MCF 10A (cell line): ENCODE measurements at regions of chrX and their contacts with region 1.

Region 1: DNA sequence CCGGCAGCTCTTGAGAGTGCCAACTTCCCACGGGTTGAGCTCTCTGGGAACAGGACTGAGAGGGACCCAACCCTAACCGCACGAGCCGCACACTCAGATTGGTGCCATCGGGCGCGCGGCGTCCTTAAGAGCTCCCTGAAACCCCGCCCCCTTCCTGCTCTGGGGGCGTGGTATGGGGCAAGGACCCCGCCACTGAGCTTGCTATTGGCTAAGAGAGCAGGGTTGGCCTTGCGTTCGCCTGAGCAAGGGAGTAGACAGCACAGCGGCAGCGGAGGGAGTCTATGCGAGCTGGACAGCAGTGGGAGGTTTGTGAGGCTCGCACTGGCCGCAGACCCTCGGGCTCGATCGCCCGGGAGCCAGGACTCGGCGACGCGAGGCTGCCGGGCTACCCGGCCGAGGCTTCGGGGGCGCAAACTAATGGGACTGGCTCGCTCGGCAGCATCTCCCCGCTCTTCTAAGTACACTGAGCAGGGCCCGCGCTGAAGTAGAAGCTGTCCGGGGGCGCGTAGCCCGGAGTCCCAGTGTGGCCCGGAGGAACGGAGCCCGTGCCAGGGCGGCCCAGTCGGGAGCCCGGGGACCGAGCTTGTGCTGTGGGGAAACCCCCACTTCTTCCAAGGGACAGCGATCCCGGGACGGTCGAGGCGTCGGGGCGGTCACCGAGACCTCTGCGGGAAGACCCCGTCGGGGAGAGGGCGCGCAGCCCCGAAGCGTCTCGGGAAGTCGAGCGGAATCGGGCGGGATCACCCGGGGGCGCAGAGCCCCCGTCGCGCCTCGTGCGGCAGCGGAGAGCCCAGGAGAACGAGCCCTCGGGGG is at the start of gene EFNB1:
- DNase-seq: peak; percentile 94
- H3K4me3 Mint-ChIP-seq: peak within 1 kb of the TSS; percentile 77
- H3K27ac Mint-ChIP-seq: peak within 1 kb of the TSS; percentile 91
- H3K4me1 Mint-ChIP-seq: peaks cover 10% of the 10 kb centered on the region
- H3K27me3 Mint-ChIP-seq: peaks cover 33% of the 10 kb centered on the region
- CTCF ChIP-seq: no peak
- total RNA-seq, gene EFNB1: 38.9 and 42.9 TPM in 2 replicates

Region 2: DNA sequence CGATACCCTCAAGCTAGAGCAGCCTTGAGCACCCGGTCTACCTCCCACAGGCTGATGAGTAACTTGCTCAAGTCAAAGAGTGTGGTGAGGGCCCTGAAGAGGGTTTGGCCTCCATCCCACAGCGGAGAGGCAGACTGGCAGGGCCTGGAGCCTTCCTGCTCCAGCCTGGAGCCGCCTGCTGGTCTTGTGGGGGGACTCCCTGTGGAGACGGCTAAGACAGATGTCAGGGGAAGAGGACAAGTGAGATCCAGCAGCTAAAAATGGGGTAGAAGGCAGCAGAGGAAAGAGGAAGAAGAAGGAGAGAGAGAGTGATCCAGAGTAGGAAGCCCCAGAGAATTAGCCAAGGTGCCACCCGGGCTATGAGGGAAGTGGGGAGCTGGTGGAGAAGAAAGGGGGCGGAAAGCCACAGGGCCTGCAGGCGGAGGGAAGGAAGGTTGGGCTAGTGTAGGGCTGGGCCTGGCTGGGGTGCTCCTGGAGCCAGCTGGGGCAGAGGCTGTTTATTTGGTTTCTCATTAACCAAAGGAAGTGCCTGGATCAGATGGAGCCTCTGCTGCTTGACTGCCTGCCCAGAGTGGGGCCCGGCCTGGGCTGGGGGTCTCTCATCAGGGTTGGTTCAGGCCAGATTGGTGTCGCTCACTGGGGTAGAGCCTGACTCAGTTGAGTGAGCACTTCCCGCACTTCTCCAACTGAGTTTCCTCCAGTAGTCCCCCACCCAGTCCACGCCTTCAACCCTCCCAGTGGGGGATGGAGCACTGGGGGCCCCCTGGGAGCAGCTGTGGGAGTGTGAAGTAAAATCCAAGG is 14.0 kb after region 1 on chrX:
- CTCF ChIA-PET with region 1: interaction called, 6 read pairs
- POLR2A ChIA-PET with region 1: interaction called, 15 read pairs
- intact Hi-C with region 1: no loop called
- DNase-seq: peak; percentile 57
- H3K4me3 Mint-ChIP-seq: no peak overlapping the region
- H3K27ac Mint-ChIP-seq: no peak overlapping the region
- H3K4me1 Mint-ChIP-seq: peaks cover 6% of the 10 kb centered on the region
- H3K27me3 Mint-ChIP-seq: peaks cover 31% of the 10 kb centered on the region
- CTCF ChIP-seq: no peak

Region 3: GRCh38 chrX:68995780-68996551 is 167.0 kb after region 1 on chrX:
- CTCF ChIA-PET with region 1: interaction called, 3 read pairs
- POLR2A ChIA-PET with region 1: interaction called, 16 read pairs
- intact Hi-C with region 1: no loop called
- DNase-seq: peak; percentile 62
- H3K4me3 Mint-ChIP-seq: peak overlapping the region; percentile 47
- H3K27ac Mint-ChIP-seq: peak overlapping the region; percentile 17
- H3K4me1 Mint-ChIP-seq: peaks cover 20% of the 10 kb centered on the region
- H3K27me3 Mint-ChIP-seq: peaks cover 37% of the 10 kb centered on the region
- CTCF ChIP-seq: no peak

Region 4: GRCh38 chrX:69060631-69061408 is 231.9 kb after region 1 on chrX:
- CTCF ChIA-PET with region 1: interaction called, 100 read pairs
- POLR2A ChIA-PET with region 1: interaction called, 34 read pairs
- intact Hi-C with region 1: no loop called
- DNase-seq: peak; percentile 65
- H3K4me3 Mint-ChIP-seq: no peak overlapping the region
- H3K27ac Mint-ChIP-seq: no peak overlapping the region
- H3K4me1 Mint-ChIP-seq: no peaks in the 10 kb centered on the region
- H3K27me3 Mint-ChIP-seq: peaks cover 24% of the 10 kb centered on the region
- CTCF ChIP-seq: peak; percentile 27

Region 5: DNA sequence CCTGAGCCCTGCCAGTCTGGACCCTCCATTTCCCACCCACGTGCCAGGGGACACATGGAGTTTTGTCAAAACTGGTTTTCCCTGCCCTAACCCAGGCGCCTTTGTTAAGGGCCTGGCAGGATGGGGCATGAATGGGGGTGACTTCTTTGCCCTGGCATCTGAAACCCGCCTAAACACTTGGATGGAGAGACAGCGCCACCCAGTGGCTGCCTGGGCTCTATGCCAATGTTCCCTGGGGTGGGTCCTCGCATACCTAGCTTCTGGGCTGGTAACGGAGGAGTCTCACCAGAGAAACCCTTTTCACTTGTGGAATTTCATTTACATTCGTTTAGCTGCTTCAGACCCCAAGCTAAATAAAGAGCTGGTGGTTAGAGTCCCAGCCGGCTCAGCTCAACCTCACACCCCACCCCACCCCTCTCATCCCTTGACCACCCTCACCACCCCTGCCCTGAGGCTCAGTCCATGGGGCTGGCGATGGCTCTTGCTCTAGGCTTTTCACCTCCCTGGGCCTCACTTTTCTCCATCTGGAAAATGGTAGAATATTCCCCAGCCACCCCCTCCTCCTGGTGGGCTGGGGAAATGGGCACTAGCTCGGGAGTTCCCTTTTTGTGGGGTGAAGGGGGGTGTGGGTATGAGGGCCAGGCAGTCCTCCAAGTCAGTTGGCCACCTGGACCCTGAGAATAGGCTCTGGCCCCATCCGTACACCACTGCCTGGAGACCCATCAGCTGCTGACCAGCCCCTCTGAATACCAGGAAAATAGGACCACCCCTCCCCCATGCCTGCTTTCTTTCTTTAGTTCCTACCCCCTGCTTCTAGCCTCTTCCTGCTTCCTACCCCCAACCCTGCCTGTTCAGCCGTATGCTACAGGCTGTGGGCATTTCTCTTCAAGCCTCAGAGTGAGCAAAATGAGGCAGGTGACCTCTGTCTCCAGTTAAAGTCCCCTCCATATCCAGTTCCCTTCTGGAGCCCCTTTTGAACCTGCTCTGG is 393.5 kb after region 1 on chrX:
- CTCF ChIA-PET with region 1: interaction called, 204 read pairs
- POLR2A ChIA-PET with region 1: interaction called, 16 read pairs
- intact Hi-C with region 1: loop called (anchors 1 kb)
- DNase-seq: peak; percentile 72
- H3K4me3 Mint-ChIP-seq: no peak overlapping the region
- H3K27ac Mint-ChIP-seq: no peak overlapping the region
- H3K4me1 Mint-ChIP-seq: no peaks in the 10 kb centered on the region
- H3K27me3 Mint-ChIP-seq: peaks cover 23% of the 10 kb centered on the region
- CTCF ChIP-seq: peak; percentile 66

Region 6: DNA sequence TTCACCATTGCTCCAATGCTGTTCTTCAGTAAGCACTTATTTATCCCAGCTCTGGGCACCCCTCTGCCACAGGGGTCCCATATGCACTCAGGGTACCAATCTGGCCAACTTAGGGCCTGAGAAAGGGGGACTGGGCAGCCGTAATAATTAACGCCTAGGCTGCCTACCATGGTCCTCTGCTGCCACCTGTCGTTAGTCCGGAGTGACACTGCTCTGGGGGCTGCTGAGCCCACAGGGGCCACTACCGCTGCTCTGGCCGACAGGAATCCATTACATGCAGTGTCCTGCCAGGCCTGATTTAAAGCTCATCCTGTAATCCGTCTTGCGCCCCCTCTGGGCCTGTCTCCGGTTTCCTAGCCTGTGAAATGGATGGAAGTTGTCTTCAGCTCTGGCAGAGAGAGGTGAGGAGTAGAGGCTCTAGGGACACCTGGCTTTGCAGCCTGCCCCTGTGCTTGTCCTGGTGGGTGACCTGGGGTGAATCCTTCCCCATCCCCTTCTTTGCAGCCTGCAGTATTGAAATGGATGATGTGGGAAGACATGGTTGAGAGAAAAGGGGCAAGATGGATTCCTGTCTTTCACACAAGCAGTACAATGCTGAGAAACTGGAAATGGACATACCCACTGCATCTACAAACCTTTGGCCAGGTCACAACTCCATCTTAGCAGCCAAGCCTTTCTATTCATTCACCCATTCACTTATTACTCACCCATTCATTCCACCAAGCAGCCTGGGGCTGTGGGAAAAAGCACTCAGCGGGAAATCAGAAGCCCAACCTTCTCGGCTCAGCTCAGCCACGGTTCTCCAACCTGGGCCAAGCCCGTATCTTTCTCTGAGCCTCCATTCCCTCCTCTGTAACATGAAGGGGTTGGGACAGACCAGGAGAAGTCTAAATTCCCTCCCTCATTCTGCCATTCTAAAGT is 558.9 kb after region 1 on chrX:
- CTCF ChIA-PET with region 1: interaction called, 44 read pairs
- POLR2A ChIA-PET with region 1: no interaction called
- intact Hi-C with region 1: no loop called
- DNase-seq: peak; percentile 45
- H3K4me3 Mint-ChIP-seq: no peak overlapping the region
- H3K27ac Mint-ChIP-seq: no peak overlapping the region
- H3K4me1 Mint-ChIP-seq: no peaks in the 10 kb centered on the region
- H3K27me3 Mint-ChIP-seq: peaks cover 100% of the 10 kb centered on the region
- CTCF ChIP-seq: peak; percentile 83